ENCODE measurements at regions of chr10 and their contacts with region 1.

Region 1: DNA sequence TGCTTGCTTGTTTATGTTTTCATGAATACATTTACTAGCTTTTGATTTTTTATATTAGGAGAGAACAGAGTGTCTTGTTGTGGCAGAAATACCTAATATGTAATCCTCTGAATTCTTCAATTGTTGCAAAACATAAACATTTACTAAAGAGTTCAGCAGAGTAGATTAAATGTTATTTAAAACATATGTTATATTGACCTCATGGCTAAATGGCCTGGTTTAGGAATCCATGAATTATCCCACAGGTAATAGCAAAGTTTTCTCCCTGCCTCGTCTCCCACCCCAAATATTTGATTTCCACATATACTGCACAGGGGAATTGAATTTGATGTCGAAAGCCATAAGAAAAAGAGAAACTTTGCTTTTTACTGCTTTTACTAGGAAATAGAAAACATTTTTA is 111.8 kb downstream of the ADK start:
- DNase-seq: no peak
- H3K4me3 ChIP-seq: no peak overlapping the region
- H3K4me3 Mint-ChIP-seq: no peak overlapping the region
- H3K27ac ChIP-seq: no peak overlapping the region
- H3K27ac Mint-ChIP-seq: peak overlapping the region in 2 of 7 donors; percentile 19 to 57
- H3K4me1 ChIP-seq: no peaks in the 10 kb centered on the region
- H3K4me1 Mint-ChIP-seq: peaks cover 0 to 12% (median 7%) of the 10 kb centered on the region in 4 donors
- H3K27me3 ChIP-seq: no peaks in the 10 kb centered on the region
- H3K27me3 Mint-ChIP-seq: no peaks in the 10 kb centered on the region

Region 2: GRCh38 chr10:74081192-74081803 is 181.6 kb before region 1 on chr10:
- CTCF ChIA-PET with region 1: no interaction called
- POLR2A ChIA-PET with region 1: no interaction called
- intact Hi-C with region 1: no loop called
- DNase-seq: peak in 4 of 5 donors; percentile 45 to 55 (median 49)
- H3K4me3 ChIP-seq: no peak overlapping the region
- H3K4me3 Mint-ChIP-seq: peak overlapping the region in 1 of 8 donors; percentile 1
- H3K27ac ChIP-seq: no peak overlapping the region
- H3K27ac Mint-ChIP-seq: peak overlapping the region in 6 of 7 donors; percentile 1 to 76 (median 25)
- H3K4me1 ChIP-seq: peaks cover 17% of the 10 kb centered on the region
- H3K4me1 Mint-ChIP-seq: peaks cover 22 to 48% (median 35%) of the 10 kb centered on the region in 4 donors
- H3K27me3 ChIP-seq: no peaks in the 10 kb centered on the region
- H3K27me3 Mint-ChIP-seq: no peaks in the 10 kb centered on the region

Region 3: DNA sequence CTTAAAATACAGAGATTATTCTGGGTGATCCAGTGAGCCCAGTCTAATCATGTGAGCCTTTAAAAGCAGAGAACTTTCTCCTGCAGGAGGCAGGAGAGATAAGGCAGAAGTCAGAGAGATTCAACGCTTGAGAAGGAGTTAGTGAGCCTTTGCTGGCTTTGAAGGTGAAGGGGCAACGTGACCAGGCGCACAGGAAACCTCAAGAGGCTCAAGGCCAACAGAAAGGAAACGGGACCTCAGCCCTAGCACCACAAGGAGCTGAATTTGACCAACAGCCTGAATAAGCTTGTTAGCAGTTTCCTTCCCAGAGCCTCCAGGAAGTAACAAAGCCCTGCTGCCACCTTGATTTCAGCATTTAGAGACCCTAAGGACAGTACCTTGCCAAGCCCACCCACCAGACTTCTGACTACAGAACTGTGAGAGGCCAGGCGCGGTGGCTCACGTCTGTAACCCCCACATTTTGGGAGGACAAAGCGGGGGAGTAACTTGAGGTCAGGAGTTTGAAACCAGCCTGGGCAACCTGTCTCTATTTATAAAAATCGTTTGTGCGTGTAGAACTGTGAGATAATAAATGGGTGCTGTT is 476.2 kb after region 1 on chr10:
- CTCF ChIA-PET with region 1: no interaction called
- POLR2A ChIA-PET with region 1: interaction called, 4 read pairs
- intact Hi-C with region 1: loop called (anchors 10 kb)
- DNase-seq: peak in 4 of 5 donors; percentile 23 to 36 (median 32)
- H3K4me3 ChIP-seq: no peak overlapping the region
- H3K4me3 Mint-ChIP-seq: peak overlapping the region in 6 of 8 donors; percentile 28 to 65 (median 49)
- H3K27ac ChIP-seq: no peak overlapping the region
- H3K27ac Mint-ChIP-seq: peak overlapping the region; percentile 63 to 89 (median 81)
- H3K4me1 ChIP-seq: peaks cover 14% of the 10 kb centered on the region
- H3K4me1 Mint-ChIP-seq: peaks cover 11 to 20% (median 17%) of the 10 kb centered on the region in 4 donors
- H3K27me3 ChIP-seq: no peaks in the 10 kb centered on the region
- H3K27me3 Mint-ChIP-seq: no peaks in the 10 kb centered on the region

Measured in CD4-positive, alpha-beta memory T cell (primary cell).